CD8-positive, alpha-beta T cell (primary cell): ENCODE measurements at regions of chr21 and their contacts with region 1.

Region 1: DNA sequence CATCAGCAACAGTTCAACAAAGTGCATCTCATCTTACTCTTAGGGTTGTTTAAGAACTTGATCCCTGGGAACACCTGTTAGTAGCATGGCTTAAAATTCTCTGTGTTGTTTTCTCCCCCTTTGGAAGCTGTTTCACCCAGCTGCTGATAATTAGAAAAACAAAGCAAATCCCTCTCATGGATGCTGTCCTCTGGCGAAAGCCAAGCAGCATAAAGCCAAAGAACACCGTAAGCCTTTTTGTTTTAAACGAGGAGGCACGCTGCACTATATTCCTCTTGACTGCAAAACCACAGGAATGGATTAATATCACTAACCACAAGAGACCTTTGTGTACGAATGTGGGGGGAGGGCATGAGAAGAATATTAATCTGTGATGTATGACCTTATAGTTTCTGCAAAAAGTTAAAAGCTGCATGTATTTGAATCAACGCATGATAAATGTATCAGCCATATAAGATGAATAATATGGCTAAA is 923.2 kb downstream of the LTN1 start:
- DNase-seq: no peak
- ATAC-seq: no peak
- H3K4me3 ChIP-seq: no peak overlapping the region
- H3K4me3 Mint-ChIP-seq: no peak overlapping the region
- H3K27ac ChIP-seq: no peak overlapping the region
- H3K27ac Mint-ChIP-seq: no peak overlapping the region
- H3K4me1 ChIP-seq: no peaks in the 10 kb centered on the region
- H3K4me1 Mint-ChIP-seq: no peaks in the 10 kb centered on the region
- H3K27me3 ChIP-seq: no peaks in the 10 kb centered on the region
- H3K27me3 Mint-ChIP-seq: no peaks in the 10 kb centered on the region
- CTCF ChIP-seq: no peak

Region 2: DNA sequence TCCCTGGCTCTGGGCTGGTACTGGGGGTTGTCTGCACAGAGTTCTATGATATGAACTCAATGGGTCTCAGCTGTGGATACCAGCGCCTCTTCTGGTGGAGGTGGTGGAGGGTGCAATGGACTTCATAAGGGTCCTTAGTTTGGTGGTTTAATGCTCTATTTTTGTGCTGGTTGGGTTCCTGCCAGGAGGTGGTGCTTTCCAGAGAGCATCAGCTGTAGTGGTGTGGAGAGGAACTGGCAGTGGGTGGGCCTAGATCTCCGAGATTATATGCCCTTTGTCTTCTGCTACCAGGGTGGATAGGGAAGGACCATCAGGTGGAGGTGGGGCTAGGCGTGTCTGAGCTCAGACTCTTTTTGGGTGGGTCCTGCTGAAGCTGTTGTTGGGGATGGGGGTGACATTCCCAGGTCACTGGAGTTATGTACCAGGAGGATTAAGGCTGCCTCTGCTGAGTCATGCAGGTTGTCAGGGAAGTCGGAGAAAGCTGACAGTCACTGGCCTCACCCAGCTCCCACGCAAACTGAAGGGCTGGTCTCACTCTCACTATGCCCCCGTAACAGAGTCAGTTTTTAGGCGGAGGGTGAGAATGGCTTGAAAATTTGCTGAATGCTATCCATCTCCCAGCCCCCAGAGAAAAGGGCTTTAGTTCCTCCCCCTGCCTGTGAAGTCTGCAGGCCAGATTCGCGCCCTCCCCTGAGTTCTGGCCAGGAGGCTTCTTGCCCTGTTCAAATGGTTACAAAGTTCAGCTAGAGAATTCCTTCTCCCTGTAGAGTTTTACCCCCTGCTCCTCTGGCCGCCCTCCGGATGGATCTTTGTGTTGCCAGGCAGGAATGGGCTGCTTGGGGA is 20.3 kb after region 1 on chr21:
- CTCF ChIA-PET with region 1: no interaction called
- POLR2A ChIA-PET with region 1: no interaction called
- intact Hi-C with region 1: loop called in 1 of 2 experiments (anchors 2 kb)
- DNase-seq: no peak
- ATAC-seq: no peak
- H3K4me3 ChIP-seq: no peak overlapping the region
- H3K4me3 Mint-ChIP-seq: no peak overlapping the region
- H3K27ac ChIP-seq: no peak overlapping the region
- H3K27ac Mint-ChIP-seq: no peak overlapping the region
- H3K4me1 ChIP-seq: no peaks in the 10 kb centered on the region
- H3K4me1 Mint-ChIP-seq: no peaks in the 10 kb centered on the region
- H3K27me3 ChIP-seq: no peaks in the 10 kb centered on the region
- H3K27me3 Mint-ChIP-seq: no peaks in the 10 kb centered on the region
- CTCF ChIP-seq: no peak